Heart right ventricle (tissue), 16 donors: ENCODE measurements at regions of chr1 and their contacts with region 1.

Region 1: DNA sequence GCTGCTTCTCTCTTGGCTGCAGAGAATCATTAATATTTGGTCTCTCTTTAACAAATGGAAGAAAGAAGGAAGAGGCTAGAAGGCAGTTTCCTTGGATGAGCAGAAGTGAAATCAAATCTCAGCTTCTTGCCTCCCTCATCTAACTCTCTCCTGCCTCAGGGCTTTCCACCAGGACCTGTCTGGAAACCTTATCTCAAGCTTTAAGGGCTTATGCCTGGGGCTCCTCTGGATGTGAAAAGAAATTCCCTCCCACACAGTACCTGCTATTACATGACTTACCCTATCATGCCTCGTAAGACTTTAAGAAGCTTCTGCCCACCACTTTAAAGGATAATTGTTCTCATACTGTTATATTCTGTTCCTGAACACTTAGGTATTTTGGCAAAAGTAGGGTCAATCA is 8.9 kb downstream of the VTCN1 start:
- DNase-seq: no peak
- ATAC-seq: no peak
- H3K4me3 ChIP-seq: no peak overlapping the region
- H3K27ac ChIP-seq: no peak overlapping the region
- H3K4me1 ChIP-seq: no peaks in the 10 kb centered on the region
- H3K27me3 ChIP-seq: peaks cover 0 to 11% (median 0%) of the 10 kb centered on the region in 7 donors
- CTCF ChIP-seq: no peak

Region 2: GRCh38 chr1:116990612-116991151 is 211.1 kb before region 1 on chr1:
- intact Hi-C with region 1: no loop called
- DNase-seq: peak; percentile 85
- ATAC-seq: peak; percentile 75 to 92 (median 90)
- H3K4me3 ChIP-seq: no peak overlapping the region
- H3K27ac ChIP-seq: peak overlapping the region; percentile 24 to 85 (median 72)
- H3K4me1 ChIP-seq: peaks cover 0 to 65% (median 35%) of the 10 kb centered on the region in 9 donors
- H3K27me3 ChIP-seq: no peaks in the 10 kb centered on the region
- CTCF ChIP-seq: no peak

Region 3: GRCh38 chr1:117173691-117174090 is 28.1 kb before region 1 on chr1:
- intact Hi-C with region 1: loop called in 1 of 10 experiments (anchors 2 kb)
- DNase-seq: no peak
- ATAC-seq: no peak
- H3K4me3 ChIP-seq: no peak overlapping the region
- H3K27ac ChIP-seq: no peak overlapping the region
- H3K4me1 ChIP-seq: peaks cover 0 to 9% (median 0%) of the 10 kb centered on the region in 9 donors
- H3K27me3 ChIP-seq: no peaks in the 10 kb centered on the region
- CTCF ChIP-seq: no peak

Region 4: GRCh38 chr1:117271571-117272358 is 70.0 kb after region 1 on chr1:
- intact Hi-C with region 1: loop called in 1 of 10 experiments (anchors 2 kb)
- DNase-seq: no peak
- ATAC-seq: no peak
- H3K4me3 ChIP-seq: no peak overlapping the region
- H3K27ac ChIP-seq: no peak overlapping the region
- H3K4me1 ChIP-seq: peaks cover 0 to 8% (median 0%) of the 10 kb centered on the region in 9 donors
- H3K27me3 ChIP-seq: no peaks in the 10 kb centered on the region
- CTCF ChIP-seq: no peak